ENCODE measurements at regions of chr2 and their contacts with region 1.

Region 1: GRCh38 chr2:189287982-189288521 is 108.5 kb upstream of the COL5A2 start:
- DNase-seq: no peak
- ATAC-seq: peak; percentile 71

Region 2: GRCh38 chr2:189008403-189009262 is 279.4 kb before region 1 on chr2:
- intact Hi-C with region 1: no loop called
- DNase-seq: no peak
- ATAC-seq: no peak

Region 3: GRCh38 chr2:189115126-189115525 is 172.9 kb before region 1 on chr2:
- intact Hi-C with region 1: loop called (anchors 10 kb)
- DNase-seq: no peak
- ATAC-seq: no peak

Region 4: DNA sequence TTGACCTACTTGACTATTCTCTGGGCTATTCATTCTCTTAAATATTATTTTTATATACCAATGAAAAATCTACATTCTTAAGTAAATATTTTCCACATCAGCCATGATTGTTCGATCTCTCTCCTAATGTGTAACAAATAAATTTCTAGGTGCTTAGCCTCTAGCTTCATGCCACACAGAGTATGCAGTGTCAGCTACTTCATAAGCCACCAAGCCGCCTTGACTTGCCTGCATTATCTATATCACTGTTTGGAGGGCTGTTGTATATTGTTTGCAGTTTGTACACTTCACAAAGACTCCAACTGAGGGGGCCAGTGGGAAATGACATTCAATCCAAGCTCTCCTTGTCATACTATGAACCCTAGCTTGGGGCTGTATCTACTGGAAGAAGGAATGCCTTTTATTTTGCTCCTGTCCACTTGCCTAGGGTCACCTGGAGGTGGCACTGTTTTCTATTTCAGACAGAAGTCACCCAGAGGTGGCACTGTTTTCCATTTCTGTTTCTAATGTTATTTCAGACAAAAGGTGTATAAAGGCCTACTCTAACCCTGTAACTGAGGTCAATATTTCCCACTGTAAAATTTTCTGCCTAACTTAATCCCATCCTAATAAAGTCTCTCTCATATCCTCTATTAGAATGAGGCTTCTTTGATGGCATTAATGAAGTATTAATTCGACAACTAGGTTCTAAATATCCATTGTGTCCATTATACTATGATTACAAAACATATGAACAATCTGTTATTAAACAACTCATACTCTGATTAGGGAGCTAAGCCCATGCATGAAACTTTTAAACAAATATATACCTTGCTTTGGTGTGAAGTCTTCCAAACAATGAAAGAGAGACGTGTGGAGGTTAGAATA is 144.9 kb before region 1 on chr2:
- intact Hi-C with region 1: no loop called
- DNase-seq: no peak
- ATAC-seq: no peak

Region 5: DNA sequence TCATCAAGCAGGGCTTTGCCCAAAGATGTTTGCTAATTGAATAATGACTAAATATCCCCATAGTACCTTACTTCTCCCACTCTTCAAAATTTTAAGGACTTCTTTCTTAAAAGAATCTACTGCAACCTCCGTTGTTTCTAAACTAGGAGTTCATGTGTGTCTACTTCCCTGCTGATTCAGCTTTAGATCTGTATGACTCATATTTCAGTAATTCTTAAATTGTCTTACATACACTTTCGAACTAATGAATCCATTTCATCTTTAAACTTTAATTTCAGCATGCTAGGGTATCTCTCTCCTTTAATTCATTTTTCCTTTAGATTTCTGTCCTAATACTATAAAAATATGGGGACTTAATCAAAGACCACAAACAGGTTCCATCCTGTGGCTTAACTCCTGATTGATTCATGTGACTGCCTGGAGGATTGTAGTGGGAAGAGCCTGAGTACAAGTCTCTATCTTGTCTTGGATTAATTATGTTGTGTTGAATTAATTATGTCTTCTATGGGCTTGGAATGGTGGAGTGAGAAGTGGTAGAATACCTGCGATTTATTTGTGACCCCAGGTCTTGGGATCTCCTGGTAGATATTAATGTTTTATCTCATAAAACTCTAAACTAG is 83.6 kb before region 1 on chr2:
- intact Hi-C with region 1: no loop called
- DNase-seq: no peak
- ATAC-seq: no peak

Region 6: GRCh38 chr2:189363559-189363958 is 75.5 kb after region 1 on chr2:
- intact Hi-C with region 1: no loop called
- DNase-seq: no peak
- ATAC-seq: no peak